Heart right ventricle (tissue), 16 donors: ENCODE measurements at regions of chr7 and their contacts with region 1.

Region 1: DNA sequence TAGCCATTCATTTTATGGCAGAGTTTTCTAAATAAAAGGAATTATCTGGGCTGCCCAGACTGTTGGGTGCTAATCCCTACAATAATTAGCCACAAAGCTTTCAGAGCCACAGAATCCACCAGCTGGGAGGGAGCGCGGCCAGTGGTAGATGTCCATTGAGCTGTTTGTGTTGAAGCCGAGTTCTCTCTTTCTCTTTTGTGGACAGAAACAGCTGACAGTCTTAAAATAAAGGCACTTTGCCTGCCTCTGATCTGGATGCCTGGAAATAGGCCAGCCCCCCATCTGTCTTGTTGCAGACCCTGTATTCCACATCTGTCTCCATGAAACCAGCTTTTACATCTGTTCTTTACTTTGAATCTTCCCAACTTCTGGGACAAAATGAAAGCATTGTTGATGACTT is 66.1 kb downstream of the MTPN start:
- DNase-seq: peak in 1 of 2 donors; percentile 40
- ATAC-seq: peak in 6 of 8 donors; percentile 22 to 69 (median 50)
- H3K4me3 ChIP-seq: peak overlapping the region in 1 of 10 donors; percentile 6
- H3K27ac ChIP-seq: peak overlapping the region in 2 of 10 donors; percentile 29 to 45
- H3K4me1 ChIP-seq: peaks cover 0 to 24% (median 7%) of the 10 kb centered on the region in 9 donors
- H3K27me3 ChIP-seq: no peaks in the 10 kb centered on the region
- CTCF ChIP-seq: no peak

Region 2: DNA sequence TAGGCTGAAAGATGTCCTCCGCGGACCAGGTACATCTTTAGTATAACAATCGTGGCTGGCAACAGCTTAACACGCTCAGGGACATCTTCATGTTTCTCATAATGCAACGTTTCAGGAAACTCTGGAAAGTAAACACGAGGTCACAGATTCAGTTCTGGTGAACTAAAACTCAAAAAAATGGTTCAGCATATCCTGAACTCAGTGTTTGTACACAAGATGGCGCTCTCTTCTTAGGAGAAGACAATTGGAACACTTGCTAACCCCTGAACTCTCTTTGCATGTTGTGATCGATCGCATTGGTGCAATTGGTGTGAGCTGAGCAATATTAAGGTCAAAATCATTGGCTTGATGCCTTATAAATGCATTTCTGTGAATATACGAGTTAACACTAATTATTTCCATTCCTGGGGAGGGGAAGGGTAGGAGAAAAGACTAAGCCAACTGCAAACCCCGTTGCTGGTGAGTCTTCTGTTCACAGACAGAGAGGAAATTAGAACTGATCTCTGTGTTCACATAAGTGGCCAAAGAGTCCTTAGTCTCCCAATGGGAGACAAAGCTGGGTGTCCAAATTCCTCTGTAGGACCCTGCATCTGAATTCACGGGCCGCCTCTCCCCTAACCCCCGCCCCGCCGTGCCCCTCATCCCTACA is 109.9 kb before region 1 on chr7:
- intact Hi-C with region 1: loop called in 1 of 10 experiments (anchors 10 kb)
- DNase-seq: peak in 1 of 2 donors; percentile 50
- ATAC-seq: peak; percentile 51 to 75 (median 64)
- H3K4me3 ChIP-seq: peak overlapping the region in 4 of 10 donors; percentile 11 to 14 (median 13)
- H3K27ac ChIP-seq: no peak overlapping the region
- H3K4me1 ChIP-seq: peaks cover 2 to 27% (median 13%) of the 10 kb centered on the region in 9 donors
- H3K27me3 ChIP-seq: no peaks in the 10 kb centered on the region
- CTCF ChIP-seq: peak; percentile 77 to 96 (median 87)

Region 3: GRCh38 chr7:135811506-135811905 is 99.6 kb before region 1 on chr7:
- intact Hi-C with region 1: loop called in 2 of 10 experiments (anchors 10 kb)
- DNase-seq: no peak
- ATAC-seq: no peak
- H3K4me3 ChIP-seq: no peak overlapping the region
- H3K27ac ChIP-seq: no peak overlapping the region
- H3K4me1 ChIP-seq: peaks cover 0 to 16% (median 11%) of the 10 kb centered on the region in 9 donors
- H3K27me3 ChIP-seq: no peaks in the 10 kb centered on the region
- CTCF ChIP-seq: no peak

Region 4: DNA sequence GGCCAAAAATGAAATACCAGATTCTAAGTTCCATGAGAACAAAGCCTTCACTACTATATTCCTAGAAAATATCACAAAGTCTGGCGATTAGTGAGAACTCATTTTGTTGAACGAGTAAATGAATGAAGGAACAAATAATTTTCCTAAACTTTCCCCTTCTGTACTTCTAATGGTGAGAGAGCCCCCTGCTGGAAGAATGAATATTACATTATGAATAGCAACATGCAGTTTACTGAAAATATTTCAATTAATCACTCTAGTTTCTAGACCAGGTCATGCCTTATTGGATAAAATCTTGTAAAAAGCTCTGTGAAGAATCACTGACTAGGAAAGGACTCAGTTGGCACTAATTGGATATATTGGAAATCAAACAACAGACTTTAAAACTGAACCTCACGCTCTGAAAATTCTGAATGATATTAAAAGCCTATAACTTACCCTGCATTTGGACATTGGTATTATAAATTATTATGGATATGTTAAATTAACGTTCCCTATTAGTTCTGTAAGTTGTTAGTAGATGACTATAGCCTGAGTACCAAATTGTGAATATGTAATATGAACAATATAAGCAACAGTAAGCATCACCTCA is 98.5 kb after region 1 on chr7:
- intact Hi-C with region 1: no loop called
- DNase-seq: no peak
- ATAC-seq: no peak
- H3K4me3 ChIP-seq: no peak overlapping the region
- H3K27ac ChIP-seq: no peak overlapping the region
- H3K4me1 ChIP-seq: peaks cover 0 to 2% (median 0%) of the 10 kb centered on the region in 9 donors
- H3K27me3 ChIP-seq: no peaks in the 10 kb centered on the region
- CTCF ChIP-seq: peak; percentile 58 to 88 (median 77)